Caco-2 (cell line): ENCODE measurements at regions of chr1 and their contacts with region 1.

Region 1: DNA sequence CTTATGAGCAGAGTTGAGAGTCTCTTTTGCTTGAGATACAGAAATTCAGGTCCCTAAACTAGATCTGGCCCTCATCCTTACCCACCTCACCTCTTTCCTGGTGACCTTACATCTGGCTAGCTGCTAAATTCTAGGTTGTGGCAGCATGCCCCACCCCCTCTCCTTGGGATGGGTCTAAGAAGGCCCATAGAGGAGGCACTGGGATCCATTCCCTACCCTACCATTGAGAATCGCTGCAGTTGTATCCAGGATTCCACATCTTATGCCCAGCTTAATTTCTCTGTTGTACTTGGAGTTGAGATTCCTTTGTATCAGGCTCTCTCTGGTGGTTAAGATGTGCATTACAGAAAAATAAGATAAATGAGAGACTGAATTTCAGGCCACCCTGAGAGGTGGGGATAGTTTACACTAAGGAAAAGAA is 9.5 kb upstream of the TMEM39B start:
- DNase-seq: peak in 1 of 2 experiments; percentile 16
- H3K4me3 ChIP-seq: no peak overlapping the region
- H3K4me3 Mint-ChIP-seq: no peak overlapping the region
- H3K27ac Mint-ChIP-seq: no peak overlapping the region
- H3K4me1 ChIP-seq: no peaks in the 10 kb centered on the region
- H3K4me1 Mint-ChIP-seq: peaks cover 6% of the 10 kb centered on the region
- H3K27me3 ChIP-seq: no peaks in the 10 kb centered on the region
- H3K27me3 Mint-ChIP-seq: no peaks in the 10 kb centered on the region
- CTCF ChIP-seq: peak in 1 of 2 experiments; percentile 22

Region 2: DNA sequence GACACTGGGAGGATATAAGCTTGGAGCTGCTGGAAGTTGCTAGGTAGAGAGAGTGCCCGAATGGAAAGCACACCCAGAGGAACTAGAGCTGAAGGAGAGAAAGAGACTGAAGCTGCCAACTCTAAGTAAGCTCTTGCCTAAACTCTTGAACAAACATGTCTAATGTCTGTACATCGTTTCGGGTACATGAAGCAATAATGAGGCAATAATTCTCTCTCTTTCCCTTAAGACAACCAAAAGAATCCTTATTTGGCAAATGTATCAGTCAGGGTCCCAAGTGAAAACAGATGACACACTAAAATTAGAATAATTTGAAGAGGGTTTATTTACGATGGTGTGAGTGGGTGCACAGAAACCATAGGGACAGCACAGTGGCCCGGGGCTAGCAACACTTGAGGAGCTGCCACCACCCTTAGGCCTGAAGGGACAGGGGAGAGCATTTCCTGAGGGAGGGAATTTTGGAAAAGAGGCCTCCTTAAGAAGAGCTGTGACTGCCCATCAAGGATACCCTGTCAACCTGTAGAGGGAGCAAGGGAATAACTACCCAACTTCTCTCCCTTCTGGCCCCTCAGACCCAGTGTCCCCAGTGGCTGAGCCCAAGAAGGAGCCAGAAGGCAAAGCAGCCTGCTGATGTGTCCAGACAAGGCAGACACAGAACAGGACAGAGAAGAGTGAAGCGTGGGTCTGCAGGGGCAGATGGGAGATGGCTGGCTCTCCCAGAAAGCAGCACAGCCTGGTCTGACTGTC is 85.7 kb before region 1 on chr1:
- CTCF ChIA-PET with region 1: interaction called, 5 read pairs
- POLR2A ChIA-PET with region 1: no interaction called
- intact Hi-C with region 1: loop called (anchors 1 kb)
- DNase-seq: peak; percentile 53 to 58
- H3K4me3 ChIP-seq: no peak overlapping the region
- H3K4me3 Mint-ChIP-seq: no peak overlapping the region
- H3K27ac Mint-ChIP-seq: peak overlapping the region; percentile 55
- H3K4me1 ChIP-seq: no peaks in the 10 kb centered on the region
- H3K4me1 Mint-ChIP-seq: no peaks in the 10 kb centered on the region
- H3K27me3 ChIP-seq: no peaks in the 10 kb centered on the region
- H3K27me3 Mint-ChIP-seq: no peaks in the 10 kb centered on the region
- CTCF ChIP-seq: peak; percentile 6 to 53

Region 3: DNA sequence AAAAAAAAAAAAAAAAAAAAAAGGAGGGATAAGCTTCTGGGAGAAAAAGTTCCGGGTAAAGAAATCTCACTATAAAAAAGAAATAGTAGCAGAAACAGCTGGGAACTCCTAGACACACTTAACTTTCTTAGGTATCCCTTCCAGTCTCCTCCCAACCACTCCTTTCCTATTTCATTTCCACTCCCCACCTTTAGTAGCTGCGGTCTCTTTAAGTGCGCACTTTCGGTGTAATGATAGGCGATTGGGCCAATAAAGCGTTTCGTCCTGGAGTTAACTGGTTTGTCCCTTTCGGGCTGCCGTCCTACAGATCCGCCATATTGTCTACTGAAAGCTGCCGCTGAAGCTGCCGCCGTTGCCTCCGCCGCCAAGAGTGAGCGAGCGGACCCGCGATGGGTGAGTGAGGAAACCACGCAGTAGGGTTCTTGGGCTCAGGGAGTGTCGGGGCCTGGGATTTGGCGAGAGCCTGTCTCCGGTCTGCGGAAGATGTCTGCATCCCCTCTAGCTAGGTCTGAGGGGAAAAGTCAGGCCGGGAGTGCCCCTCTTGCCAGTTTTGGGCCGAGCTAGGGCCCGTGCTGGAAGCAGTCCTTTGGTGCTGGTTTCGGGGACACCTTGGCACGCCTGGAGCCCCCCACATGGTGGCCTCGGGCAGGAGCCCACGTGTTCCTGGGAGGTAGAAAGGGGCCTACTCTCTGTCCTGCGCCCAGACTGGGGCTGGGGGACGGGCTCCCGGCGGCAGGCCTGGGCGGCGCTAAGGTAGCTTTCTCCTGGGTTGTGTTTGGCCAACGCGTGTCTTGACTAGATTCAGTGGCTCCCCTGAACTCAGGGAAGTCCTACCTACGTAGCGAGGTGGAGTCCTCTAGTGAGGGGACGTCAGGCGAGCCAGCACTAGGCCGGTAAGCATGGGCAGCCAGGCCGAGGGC is 44.7 kb after region 1 on chr1 and contains the start of gene KPNA6:
- CTCF ChIA-PET with region 1: no interaction called
- POLR2A ChIA-PET with region 1: interaction called, 14 read pairs
- intact Hi-C with region 1: no loop called
- DNase-seq: peak; percentile 87 to 92
- H3K4me3 ChIP-seq: peak within 1 kb of the TSS; percentile 63
- H3K4me3 Mint-ChIP-seq: peak within 1 kb of the TSS; percentile 97
- H3K27ac Mint-ChIP-seq: peak within 1 kb of the TSS; percentile 90
- H3K4me1 ChIP-seq: peaks cover 10% of the 10 kb centered on the region
- H3K4me1 Mint-ChIP-seq: peaks cover 10% of the 10 kb centered on the region
- H3K27me3 ChIP-seq: no peaks in the 10 kb centered on the region
- H3K27me3 Mint-ChIP-seq: no peaks in the 10 kb centered on the region
- CTCF ChIP-seq: no peak
- total RNA-seq, gene KPNA6: 49.8 and 52.8 TPM in 2 replicates